ENCODE measurements at regions of chr7 and their contacts with region 1.

Region 1: DNA sequence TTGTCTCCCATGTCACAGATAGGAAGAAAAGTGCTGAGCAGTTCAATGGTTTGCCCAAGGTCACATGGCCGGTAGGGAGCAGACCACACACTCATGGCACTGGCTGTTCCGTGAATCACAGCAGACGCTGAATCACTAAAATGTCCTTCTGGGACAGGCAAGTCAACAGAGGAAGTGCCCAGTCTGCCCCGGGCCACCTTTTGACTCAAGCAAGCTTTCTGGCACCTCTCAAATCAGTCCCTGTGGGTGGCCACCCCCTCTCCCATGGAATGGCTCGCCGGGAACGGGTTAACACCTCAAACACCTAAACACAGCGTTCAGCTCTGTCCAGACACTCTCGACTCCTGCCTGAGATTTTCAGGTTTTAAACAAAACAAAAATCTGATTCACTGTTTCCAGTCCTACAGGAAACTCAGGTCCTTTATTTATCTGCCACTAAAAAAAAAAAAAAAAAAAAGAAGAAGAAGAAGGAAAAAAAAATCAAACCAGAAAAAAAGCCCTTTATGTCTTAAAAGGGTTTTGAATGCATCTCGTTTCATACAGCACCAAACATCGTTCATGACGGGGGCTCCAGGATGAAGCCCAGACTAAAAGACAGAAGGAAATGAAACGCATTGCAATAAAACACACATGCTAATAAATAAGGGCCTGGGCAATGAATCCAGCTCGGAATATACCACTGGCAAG is 15.5 kb downstream of the CARD11 start:
- DNase-seq: peak in 1 of 5 donors; percentile 48
- H3K4me3 ChIP-seq: no peak overlapping the region
- H3K4me3 Mint-ChIP-seq: peak overlapping the region in 7 of 8 donors; percentile 36 to 79 (median 54)
- H3K27ac ChIP-seq: no peak overlapping the region
- H3K27ac Mint-ChIP-seq: peak overlapping the region; percentile 42 to 88 (median 80)
- H3K4me1 ChIP-seq: peaks cover 25% of the 10 kb centered on the region
- H3K4me1 Mint-ChIP-seq: peaks cover 35 to 76% (median 57%) of the 10 kb centered on the region in 4 donors
- H3K27me3 ChIP-seq: no peaks in the 10 kb centered on the region
- H3K27me3 Mint-ChIP-seq: no peaks in the 10 kb centered on the region

Region 2: GRCh38 chr7:2956526-2957368 is 71.5 kb before region 1 on chr7:
- CTCF ChIA-PET with region 1: no interaction called
- POLR2A ChIA-PET with region 1: no interaction called
- intact Hi-C with region 1: loop called (anchors 10 kb)
- DNase-seq: peak in 1 of 5 donors; percentile 61
- H3K4me3 ChIP-seq: no peak overlapping the region
- H3K4me3 Mint-ChIP-seq: no peak overlapping the region
- H3K27ac ChIP-seq: no peak overlapping the region
- H3K27ac Mint-ChIP-seq: peak overlapping the region in 6 of 7 donors; percentile 21 to 84 (median 59)
- H3K4me1 ChIP-seq: peaks cover 60% of the 10 kb centered on the region
- H3K4me1 Mint-ChIP-seq: peaks cover 32 to 75% (median 54%) of the 10 kb centered on the region in 4 donors
- H3K27me3 ChIP-seq: no peaks in the 10 kb centered on the region
- H3K27me3 Mint-ChIP-seq: no peaks in the 10 kb centered on the region

Region 3: GRCh38 chr7:3559278-3559677 is 531.1 kb after region 1 on chr7:
- CTCF ChIA-PET with region 1: no interaction called
- POLR2A ChIA-PET with region 1: no interaction called
- intact Hi-C with region 1: no loop called
- DNase-seq: no peak
- H3K4me3 ChIP-seq: no peak overlapping the region
- H3K4me3 Mint-ChIP-seq: no peak overlapping the region
- H3K27ac ChIP-seq: no peak overlapping the region
- H3K27ac Mint-ChIP-seq: no peak overlapping the region
- H3K4me1 ChIP-seq: no peaks in the 10 kb centered on the region
- H3K4me1 Mint-ChIP-seq: peaks cover 0 to 3% (median 1%) of the 10 kb centered on the region in 4 donors
- H3K27me3 ChIP-seq: no peaks in the 10 kb centered on the region
- H3K27me3 Mint-ChIP-seq: peaks cover 3 to 4% of the 10 kb centered on the region in 2 donors